CD8-positive, alpha-beta memory T cell (primary cell): ENCODE measurements at regions of chr9 and their contacts with region 1.

Region 1: DNA sequence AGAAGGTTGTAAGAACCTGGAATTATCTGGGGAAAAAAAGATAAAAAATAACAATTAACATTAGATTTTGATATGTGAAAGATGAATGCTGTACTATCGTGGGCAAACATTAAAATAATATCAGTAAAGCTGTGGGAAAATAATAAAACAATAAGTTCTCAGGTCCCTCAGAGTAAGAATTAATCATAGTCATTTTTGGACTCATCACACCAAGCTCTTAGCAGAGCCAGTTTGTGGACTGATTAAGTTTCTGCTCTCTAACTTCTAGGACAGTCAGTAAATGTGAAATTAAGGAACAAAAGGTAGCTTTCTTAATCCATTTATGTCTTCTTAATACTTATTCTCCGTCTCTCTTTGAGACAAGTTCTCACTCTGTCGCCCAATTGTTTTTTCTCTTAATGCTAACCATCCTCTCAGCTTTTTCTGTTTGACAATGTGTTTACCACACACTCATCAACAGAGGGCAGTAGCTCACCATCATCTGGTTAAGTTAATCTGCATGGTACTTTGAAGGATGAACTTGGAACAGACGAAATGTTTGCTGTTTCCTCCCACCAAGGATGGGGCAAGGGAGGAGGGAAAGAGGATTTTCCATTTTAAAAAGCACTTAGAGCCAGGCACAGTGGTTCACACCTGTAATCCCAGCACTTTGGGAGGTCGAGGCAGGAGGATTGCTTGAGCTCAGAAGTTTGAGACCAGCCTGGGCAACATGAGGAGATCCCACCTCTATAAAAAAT is 5.3 kb upstream of the ACO1 start:
- DNase-seq: peak; percentile 19 to 64 (median 52)
- H3K4me3 ChIP-seq: no peak overlapping the region
- H3K4me3 Mint-ChIP-seq: peak overlapping the region in 2 of 7 donors; percentile 19 to 22
- H3K27ac ChIP-seq: no peak overlapping the region
- H3K27ac Mint-ChIP-seq: peak overlapping the region in 4 of 8 donors; percentile 0 to 75 (median 22)
- H3K4me1 ChIP-seq: peaks cover 14% of the 10 kb centered on the region
- H3K4me1 Mint-ChIP-seq: peaks cover 15 to 19% (median 17%) of the 10 kb centered on the region in 3 donors
- H3K27me3 ChIP-seq: no peaks in the 10 kb centered on the region
- H3K27me3 Mint-ChIP-seq: peaks cover 4 to 34% of the 10 kb centered on the region in 2 donors

Region 2: DNA sequence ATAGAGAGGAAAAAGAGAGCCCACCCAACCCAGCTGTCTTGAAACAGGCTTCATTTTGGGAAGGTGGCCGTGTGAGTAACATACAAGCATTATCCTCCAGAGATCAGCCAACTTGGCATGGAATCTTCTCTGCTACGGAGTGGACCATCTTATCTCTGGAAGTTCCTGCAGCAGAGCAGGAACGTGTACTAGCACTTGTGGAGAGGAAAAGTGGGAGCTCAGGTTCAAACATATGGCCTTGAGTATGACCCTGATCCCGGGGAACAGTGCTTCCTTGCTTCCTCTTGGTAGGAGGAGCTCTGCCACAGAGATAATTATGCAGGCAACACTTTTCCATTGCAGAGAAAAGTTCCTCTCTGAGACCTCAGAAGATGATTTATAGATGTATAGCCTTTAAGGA is 485.2 kb before region 1 on chr9:
- CTCF ChIA-PET with region 1: no interaction called
- POLR2A ChIA-PET with region 1: no interaction called
- DNase-seq: no peak
- H3K4me3 ChIP-seq: no peak overlapping the region
- H3K4me3 Mint-ChIP-seq: no peak overlapping the region
- H3K27ac ChIP-seq: no peak overlapping the region
- H3K27ac Mint-ChIP-seq: no peak overlapping the region
- H3K4me1 ChIP-seq: no peaks in the 10 kb centered on the region
- H3K4me1 Mint-ChIP-seq: no peaks in the 10 kb centered on the region
- H3K27me3 ChIP-seq: no peaks in the 10 kb centered on the region
- H3K27me3 Mint-ChIP-seq: peaks cover 0 to 2% of the 10 kb centered on the region in 2 donors

Region 3: DNA sequence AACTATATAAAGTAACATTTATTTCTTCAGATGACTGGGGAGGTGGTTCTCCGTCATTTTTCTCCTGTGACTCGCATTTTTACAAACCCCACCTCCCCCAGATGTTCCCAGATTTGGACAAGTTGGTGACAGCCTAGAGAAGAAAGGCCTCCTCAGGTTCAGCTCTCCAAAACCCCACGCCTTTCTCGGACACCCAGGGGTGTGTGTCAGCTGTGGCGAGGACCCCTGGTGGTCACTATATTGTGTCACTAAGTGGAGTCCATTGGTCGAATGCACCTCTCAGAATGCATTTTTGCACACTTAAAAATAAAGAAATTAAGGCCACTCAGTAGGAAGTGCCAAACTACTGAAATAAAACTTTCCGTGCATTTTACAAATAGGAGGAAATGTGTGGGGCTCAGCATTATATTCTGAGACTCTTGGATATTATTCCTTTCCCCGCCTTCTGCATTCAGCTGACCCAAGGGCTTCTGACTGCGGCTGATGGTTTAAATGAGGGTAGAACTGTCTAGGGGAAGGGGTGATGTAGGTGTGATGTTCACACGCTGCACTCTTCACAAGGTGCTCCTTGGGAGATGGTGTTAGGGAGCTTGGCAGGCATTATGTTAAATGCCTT is 52.9 kb after region 1 on chr9:
- CTCF ChIA-PET with region 1: interaction called, 56 read pairs
- POLR2A ChIA-PET with region 1: no interaction called
- DNase-seq: peak; percentile 4 to 64 (median 14)
- H3K4me3 ChIP-seq: no peak overlapping the region
- H3K4me3 Mint-ChIP-seq: no peak overlapping the region
- H3K27ac ChIP-seq: no peak overlapping the region
- H3K27ac Mint-ChIP-seq: peak overlapping the region in 3 of 8 donors; percentile 61 to 91 (median 71)
- H3K4me1 ChIP-seq: no peaks in the 10 kb centered on the region
- H3K4me1 Mint-ChIP-seq: no peaks in the 10 kb centered on the region
- H3K27me3 ChIP-seq: no peaks in the 10 kb centered on the region
- H3K27me3 Mint-ChIP-seq: no peaks in the 10 kb centered on the region

Region 4: DNA sequence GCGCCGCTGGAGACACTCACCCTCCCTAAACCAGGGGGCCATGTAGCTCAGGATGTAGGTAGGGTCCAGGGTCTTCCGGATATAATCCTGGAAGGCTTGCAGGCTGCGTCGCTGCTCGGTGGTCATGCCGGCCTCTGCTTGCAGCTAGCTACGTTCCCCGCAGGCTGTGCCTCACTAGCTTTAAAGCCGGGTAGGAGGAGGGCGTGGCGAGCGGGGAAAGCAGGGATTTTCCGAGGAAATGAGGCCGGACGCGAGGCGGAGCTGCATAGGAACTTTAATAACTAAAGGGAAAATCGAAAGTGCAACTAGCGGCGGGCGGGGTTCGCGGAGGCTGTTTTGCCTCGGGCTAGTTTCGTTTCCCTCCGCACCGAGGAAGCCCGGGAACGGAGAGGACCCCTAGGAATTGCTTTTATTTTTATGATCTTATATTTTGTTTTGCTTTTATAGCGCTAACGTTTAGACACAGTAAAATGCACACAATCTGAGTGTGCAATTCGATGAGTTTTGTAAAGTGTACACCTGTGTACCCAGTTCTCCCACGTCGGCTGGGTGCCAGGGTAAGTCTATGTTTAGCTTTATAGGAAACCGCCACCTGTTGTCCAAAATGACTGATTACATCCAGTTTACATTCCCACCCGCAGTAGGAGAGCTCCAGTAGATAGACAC is 147.0 kb after region 1 on chr9 and contains the start of gene RIGI:
- CTCF ChIA-PET with region 1: interaction called, 36 read pairs
- POLR2A ChIA-PET with region 1: interaction called, 4 read pairs
- DNase-seq: peak; percentile 79 to 89 (median 83)
- H3K4me3 ChIP-seq: peak within 1 kb of the TSS; percentile 90
- H3K4me3 Mint-ChIP-seq: peak within 1 kb of the TSS; percentile 86 to 98 (median 98)
- H3K27ac ChIP-seq: peak within 1 kb of the TSS; percentile 71
- H3K27ac Mint-ChIP-seq: peak within 1 kb of the TSS; percentile 78 to 99 (median 96)
- H3K4me1 ChIP-seq: peaks cover 28% of the 10 kb centered on the region
- H3K4me1 Mint-ChIP-seq: peaks cover 52 to 57% (median 54%) of the 10 kb centered on the region in 3 donors
- H3K27me3 ChIP-seq: no peaks in the 10 kb centered on the region
- H3K27me3 Mint-ChIP-seq: no peaks in the 10 kb centered on the region
- total RNA-seq, gene RIGI: 5.9 to 6.5 TPM

Region 5: GRCh38 chr9:32550562-32551433 is 171.6 kb after region 1 on chr9:
- CTCF ChIA-PET with region 1: interaction called, 49 read pairs
- POLR2A ChIA-PET with region 1: interaction called, 14 read pairs
- DNase-seq: peak; percentile 95 to 98 (median 96)
- H3K4me3 ChIP-seq: peak overlapping the region; percentile 83
- H3K4me3 Mint-ChIP-seq: peak overlapping the region; percentile 90 to 98 (median 93)
- H3K27ac ChIP-seq: peak overlapping the region; percentile 89
- H3K27ac Mint-ChIP-seq: peak overlapping the region; percentile 96 to 99 (median 98)
- H3K4me1 ChIP-seq: peaks cover 34% of the 10 kb centered on the region
- H3K4me1 Mint-ChIP-seq: peaks cover 53 to 82% (median 60%) of the 10 kb centered on the region in 3 donors
- H3K27me3 ChIP-seq: no peaks in the 10 kb centered on the region
- H3K27me3 Mint-ChIP-seq: no peaks in the 10 kb centered on the region

Region 6: DNA sequence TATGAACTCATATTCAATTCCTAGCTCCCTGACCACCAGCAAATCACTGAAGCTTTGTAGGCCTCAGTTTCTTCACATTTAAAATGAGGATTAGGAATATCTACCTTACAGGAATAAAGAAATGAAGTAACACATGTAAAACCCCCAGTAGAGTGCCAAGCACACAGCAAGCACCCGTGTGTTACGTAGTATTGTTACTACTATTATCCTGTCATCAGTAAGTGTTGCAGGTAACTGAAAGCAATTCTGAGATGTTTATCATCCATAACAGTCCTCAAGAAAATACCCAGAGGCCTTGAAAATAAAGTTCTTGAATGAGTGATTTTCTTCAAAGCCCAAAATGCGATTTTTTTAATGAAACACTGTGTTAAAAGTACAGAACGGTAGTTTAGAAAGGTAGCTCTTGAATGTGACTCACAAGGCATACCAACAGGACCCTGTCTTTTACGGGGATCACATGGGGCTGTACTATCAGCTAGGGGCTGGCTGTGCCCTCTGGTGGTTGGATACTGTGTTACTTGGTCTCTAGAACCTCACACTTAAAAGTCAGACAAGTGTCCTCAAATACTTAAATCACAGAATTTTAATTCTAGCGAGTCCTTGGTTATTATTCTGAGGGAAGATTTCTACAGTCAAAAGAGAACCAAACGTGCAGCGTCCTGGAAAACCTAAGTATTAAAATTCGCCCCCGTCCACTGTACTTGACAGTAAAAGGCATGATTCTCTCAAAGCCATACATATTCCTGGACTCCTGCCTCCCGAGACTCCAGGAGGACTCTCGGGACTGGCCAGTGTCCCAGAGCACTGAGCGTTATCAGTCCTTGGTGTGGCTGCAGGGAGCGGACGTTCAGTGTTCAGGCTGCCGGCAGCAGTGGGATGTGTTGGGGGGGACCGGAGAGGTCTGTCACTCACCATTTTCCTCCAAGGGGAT is 193.1 kb after region 1 on chr9:
- CTCF ChIA-PET with region 1: interaction called, 342 read pairs
- POLR2A ChIA-PET with region 1: interaction called, 10 read pairs
- DNase-seq: peak; percentile 56 to 86 (median 73)
- H3K4me3 ChIP-seq: peak overlapping the region; percentile 98
- H3K4me3 Mint-ChIP-seq: peak overlapping the region; percentile 98 to 100 (median 99)
- H3K27ac ChIP-seq: peak overlapping the region; percentile 92
- H3K27ac Mint-ChIP-seq: peak overlapping the region; percentile 96 to 99 (median 99)
- H3K4me1 ChIP-seq: peaks cover 21% of the 10 kb centered on the region
- H3K4me1 Mint-ChIP-seq: peaks cover 33 to 40% (median 35%) of the 10 kb centered on the region in 3 donors
- H3K27me3 ChIP-seq: no peaks in the 10 kb centered on the region
- H3K27me3 Mint-ChIP-seq: peaks cover 0 to 3% of the 10 kb centered on the region in 2 donors

Region 7: GRCh38 chr9:32968101-32969011 is 589.2 kb after region 1 on chr9:
- CTCF ChIA-PET with region 1: interaction called, 13 read pairs
- POLR2A ChIA-PET with region 1: no interaction called
- DNase-seq: peak; percentile 35 to 67 (median 40)
- H3K4me3 ChIP-seq: no peak overlapping the region
- H3K4me3 Mint-ChIP-seq: no peak overlapping the region
- H3K27ac ChIP-seq: no peak overlapping the region
- H3K27ac Mint-ChIP-seq: peak overlapping the region in 1 of 8 donors; percentile 38
- H3K4me1 ChIP-seq: no peaks in the 10 kb centered on the region
- H3K4me1 Mint-ChIP-seq: peaks cover 0 to 3% (median 2%) of the 10 kb centered on the region in 3 donors
- H3K27me3 ChIP-seq: no peaks in the 10 kb centered on the region
- H3K27me3 Mint-ChIP-seq: no peaks in the 10 kb centered on the region